PC-3 (cell line): ENCODE measurements at regions of chr3 and their contacts with region 1.

Region 1: DNA sequence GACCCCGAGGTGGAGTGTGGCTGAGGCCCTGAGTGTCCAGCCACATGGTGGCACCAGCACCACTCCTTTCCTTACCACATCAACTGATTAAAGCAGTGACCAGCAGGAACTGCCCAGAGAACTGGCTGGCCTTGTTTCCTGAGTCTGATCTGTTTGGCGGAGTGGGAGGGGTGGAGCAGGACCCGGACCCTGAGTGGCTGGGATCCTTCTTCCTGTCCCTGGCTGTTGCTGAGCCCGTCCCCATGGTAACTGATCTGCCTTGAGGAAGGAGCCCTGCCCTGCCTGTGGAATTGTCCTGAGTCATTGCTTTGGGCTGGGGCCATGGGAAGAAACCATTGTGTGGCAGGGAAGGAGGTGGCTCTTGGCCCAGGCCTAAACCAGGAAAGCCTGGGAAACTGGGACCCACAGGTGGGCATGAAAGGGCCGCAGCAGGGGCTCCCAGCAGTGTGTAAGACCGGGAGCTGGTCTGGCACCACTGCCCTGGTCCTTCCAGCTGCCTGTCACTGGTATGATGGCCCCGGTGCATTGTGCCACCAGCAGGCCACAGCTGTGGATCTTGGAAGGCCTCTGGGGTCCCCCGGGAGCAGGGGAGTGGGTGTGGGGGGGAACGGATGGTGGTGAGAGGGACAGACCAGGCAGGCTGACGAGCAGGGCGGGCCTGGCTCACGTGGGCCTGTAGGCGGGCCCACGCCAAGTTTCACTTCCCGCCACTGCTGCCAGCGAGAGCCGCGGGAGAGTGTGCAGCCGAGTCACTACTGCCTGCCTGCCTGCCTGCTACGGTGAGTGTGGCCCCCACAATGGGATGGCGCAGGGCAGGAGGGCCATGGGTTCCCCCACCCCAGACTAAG is 19.2 kb downstream of the ATRIP start:
- DNase-seq: peak; percentile 99
- ATAC-seq: peak; percentile 94
- H3K4me3 ChIP-seq: peak overlapping the region; percentile 51
- H3K27ac ChIP-seq: peak overlapping the region; percentile 99
- H3K4me1 ChIP-seq: peaks cover 31% of the 10 kb centered on the region
- H3K27me3 ChIP-seq: no peaks in the 10 kb centered on the region
- CTCF ChIP-seq: peak; percentile 94

Region 2: GRCh38 chr3:48347500-48347899 is 118.3 kb before region 1 on chr3:
- CTCF ChIA-PET with region 1: no interaction called
- POLR2A ChIA-PET with region 1: no interaction called
- intact Hi-C with region 1: no loop called
- DNase-seq: no peak
- ATAC-seq: no peak
- H3K4me3 ChIP-seq: no peak overlapping the region
- H3K27ac ChIP-seq: no peak overlapping the region
- H3K4me1 ChIP-seq: no peaks in the 10 kb centered on the region
- H3K27me3 ChIP-seq: peaks cover 5% of the 10 kb centered on the region; the same call in 1 of the 2 replicates
- CTCF ChIP-seq: no peak

Region 3: DNA sequence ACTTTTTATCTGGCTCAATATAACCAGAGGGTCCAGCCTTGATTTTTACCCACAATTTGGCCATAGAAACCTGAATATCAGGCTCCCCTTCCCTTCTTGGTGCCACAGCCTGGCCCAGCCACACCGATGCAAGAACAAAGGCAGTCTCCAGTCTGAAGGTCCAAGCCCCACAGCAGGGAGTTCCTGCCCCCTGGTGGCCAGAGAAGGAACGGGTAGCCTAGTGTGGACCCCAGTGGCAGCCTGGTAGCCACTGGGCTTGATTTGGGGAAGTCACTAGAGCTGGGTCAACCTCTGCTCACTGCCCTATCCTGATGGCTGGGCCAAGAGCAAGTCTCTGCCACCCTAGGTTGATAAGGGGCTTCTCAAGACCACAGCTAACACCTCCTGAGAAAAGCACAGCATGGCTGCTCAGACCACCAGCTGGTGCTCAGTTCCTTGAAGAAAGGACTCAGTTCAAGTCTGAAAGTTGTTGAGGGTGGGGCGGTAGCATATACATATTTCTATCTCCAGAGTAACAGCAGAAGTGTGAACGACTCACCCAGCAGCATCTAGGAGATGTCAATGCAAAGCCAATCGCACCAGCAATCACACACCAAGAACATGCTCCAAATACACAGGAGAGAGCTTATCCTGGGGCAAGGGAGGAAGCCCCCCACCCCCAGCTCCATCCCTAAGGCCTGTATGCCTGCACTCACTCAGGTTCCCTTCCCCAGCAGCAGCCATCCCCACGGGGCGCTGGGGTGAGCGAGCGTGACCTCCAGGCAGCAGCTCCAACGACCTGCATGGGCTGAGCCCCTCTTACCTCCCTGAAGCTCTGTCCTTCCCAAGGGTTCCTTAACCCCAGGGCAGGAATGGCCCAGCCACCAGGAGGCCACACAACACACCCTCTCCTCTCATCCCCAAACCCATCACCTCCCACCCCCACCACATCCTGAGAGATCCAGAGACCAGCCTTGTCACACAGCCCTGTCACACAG is 83.3 kb after region 1 on chr3:
- CTCF ChIA-PET with region 1: no interaction called
- POLR2A ChIA-PET with region 1: no interaction called
- intact Hi-C with region 1: loop called (anchors 1 kb)
- DNase-seq: peak; percentile 90
- ATAC-seq: peak; percentile 99
- H3K4me3 ChIP-seq: no peak overlapping the region
- H3K27ac ChIP-seq: no peak overlapping the region
- H3K4me1 ChIP-seq: no peaks in the 10 kb centered on the region
- H3K27me3 ChIP-seq: no peaks in the 10 kb centered on the region
- CTCF ChIP-seq: peak; percentile 97